Activated T-helper 2 cell treated with anti-CD3 and anti-CD28 coated beads, Interferon-gamma antibody, Interleukin-2, Interleukin-4, amounts not matched to agents 10 μg/mL and 5 μg/mL and 100 μg/mL, durations not matched to agents 14 hours and 24 hours and 36 hours (primary cell): ENCODE measurements at regions of chr10 and their contacts with region 1.

Region 1: DNA sequence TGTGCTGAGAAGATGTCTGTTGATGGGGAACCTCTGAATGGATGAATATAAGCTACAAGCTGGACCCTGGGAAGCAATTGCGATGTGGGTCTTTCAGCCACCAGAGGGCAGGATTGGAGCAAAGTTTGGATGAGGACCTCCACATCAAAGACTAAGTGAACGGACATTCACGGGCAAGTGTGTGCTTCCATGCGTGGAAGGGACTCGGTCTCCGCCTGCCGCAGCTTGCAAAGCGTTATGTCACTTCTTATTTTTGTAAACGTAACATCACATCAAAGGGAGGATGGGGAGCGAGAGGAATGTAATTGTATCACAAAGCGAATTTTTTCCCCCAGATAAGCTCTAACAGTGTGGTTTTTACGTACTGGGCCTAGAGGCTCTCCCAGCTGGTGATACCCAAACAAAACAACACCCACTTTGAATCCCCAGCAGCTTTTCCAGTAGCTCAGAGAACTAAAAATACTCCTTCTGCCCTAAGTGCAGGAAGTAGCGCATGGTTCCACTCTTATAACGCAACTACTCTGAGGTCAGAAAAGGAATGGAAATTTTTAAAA is 65.0 kb downstream of the VWA2 start:
- DNase-seq: peak; percentile 59
- H3K4me3 Mint-ChIP-seq: peak overlapping the region; percentile 90
- H3K27ac Mint-ChIP-seq: peak overlapping the region; percentile 84
- H3K4me1 Mint-ChIP-seq: peaks cover 13% of the 10 kb centered on the region
- H3K27me3 Mint-ChIP-seq: no peaks in the 10 kb centered on the region

Region 2: DNA sequence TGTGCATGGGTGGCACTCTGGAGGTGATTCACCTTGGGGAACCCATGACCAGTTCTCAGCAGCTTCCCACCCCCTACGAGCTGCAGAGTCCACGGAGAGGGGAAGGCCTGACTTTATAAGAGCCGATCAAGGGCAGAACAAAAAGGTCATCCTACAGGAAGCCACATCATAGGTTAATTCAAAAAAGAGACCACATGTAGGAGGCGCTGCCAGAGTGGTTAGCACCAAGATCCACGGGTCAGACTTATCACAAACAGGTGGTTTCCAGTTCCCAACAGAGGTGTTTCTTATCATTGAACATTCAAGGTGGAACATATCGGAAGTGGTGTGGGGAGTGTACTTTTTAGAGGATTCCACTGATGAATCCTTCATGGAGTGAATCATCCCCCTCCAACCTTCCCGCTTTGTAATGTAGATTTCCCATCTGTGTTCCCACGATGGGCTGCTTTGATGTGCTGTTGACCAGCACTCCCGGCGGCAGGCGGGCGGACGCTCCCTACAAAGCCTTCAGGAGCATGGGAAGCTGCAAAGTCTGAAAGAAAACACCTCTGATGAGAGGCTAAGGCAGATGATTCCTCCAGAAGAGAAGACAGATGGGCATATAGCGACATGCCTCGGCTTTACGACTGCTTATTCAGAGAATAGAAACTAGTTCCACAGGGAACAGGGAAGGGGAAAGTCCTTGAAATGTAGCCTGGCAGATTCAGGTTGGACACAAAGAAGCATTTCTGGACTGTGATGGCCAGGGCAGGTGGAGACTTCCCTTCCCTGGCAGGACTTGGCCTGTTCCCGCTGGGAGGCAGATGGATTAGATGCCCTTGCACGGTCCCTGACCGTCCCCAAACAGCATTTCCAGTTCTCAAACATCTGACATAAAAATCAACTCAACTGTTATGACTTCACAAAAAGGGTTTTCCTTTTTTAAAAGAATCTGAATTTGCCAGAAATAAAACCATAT is 33.7 kb after region 1 on chr10:
- intact Hi-C with region 1: loop called (anchors 1 kb)
- DNase-seq: no peak
- H3K4me3 Mint-ChIP-seq: no peak overlapping the region
- H3K27ac Mint-ChIP-seq: peak overlapping the region; percentile 46
- H3K4me1 Mint-ChIP-seq: peaks cover 33% of the 10 kb centered on the region
- H3K27me3 Mint-ChIP-seq: peaks cover 2% of the 10 kb centered on the region

Region 3: DNA sequence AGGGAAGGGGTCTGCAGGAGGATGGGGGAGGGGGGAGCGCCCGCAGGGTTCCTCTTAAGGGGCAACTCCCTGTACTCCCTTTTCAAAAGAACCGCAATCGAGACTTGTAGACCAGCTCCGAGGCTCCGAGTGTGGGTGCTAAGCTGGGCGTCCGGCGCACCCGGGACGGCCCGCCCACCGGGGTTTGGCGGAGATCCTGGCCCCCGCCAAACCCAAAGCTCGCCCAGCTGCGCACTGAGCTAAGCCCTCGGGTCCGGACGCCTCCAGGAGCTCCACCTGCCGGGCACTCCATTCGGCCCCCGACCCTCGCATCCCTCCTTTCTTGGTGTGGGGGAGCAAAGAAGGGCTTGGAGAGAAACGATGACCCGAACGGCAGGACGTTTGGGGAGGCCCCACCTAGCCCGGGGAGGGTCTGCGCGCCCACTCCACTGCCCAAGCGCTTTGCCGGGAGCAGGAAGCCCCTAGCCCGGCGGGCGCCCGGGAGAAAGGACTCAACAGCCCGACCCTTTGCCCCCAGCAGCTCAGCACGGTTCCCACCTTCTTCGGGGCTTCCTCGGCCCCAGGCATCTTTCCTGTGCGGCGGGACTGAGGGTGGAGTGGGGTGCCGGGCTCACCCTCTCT is 99.6 kb after region 1 on chr10:
- intact Hi-C with region 1: loop called (anchors 5 kb)
- DNase-seq: no peak
- H3K4me3 Mint-ChIP-seq: peak overlapping the region; percentile 24
- H3K27ac Mint-ChIP-seq: no peak overlapping the region
- H3K4me1 Mint-ChIP-seq: peaks cover 8% of the 10 kb centered on the region
- H3K27me3 Mint-ChIP-seq: peaks cover 66% of the 10 kb centered on the region

Region 4: DNA sequence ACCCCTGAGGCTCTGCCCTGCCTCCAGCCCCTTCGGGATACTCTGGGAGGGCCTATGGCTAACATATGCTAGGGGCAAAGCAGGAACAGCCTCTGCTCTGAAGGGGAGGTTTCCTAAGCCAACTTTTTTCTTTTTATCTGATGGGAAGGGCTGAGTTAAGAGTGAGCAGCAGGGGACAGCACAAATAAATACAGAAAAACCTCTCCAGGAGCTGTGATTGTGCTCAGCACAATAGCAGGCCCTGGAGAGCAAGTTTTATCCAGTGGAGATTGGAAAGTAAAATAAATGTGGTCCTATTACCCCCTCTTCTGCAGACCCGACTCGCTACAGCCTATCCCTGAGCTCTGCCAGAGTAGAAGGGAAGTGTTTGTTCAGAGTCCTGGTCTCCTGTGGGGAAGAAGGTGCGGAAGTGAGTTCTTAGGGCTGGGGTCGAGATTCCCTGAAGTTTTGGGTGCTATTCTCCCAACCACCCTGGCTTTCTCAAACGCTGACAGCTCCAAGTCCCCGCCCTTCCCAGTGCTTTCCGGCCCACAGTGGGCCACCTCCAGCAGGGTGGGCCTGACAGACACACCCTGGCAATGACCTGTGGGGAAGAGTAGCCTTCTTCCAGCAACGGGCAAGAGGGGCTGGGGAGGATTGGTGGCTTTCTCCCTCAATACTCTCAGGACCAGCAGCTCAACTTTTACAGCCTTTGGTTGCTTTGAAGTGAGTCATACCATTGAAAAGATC is 123.2 kb after region 1 on chr10:
- intact Hi-C with region 1: no loop called
- DNase-seq: no peak
- H3K4me3 Mint-ChIP-seq: no peak overlapping the region
- H3K27ac Mint-ChIP-seq: no peak overlapping the region
- H3K4me1 Mint-ChIP-seq: no peaks in the 10 kb centered on the region
- H3K27me3 Mint-ChIP-seq: peaks cover 5% of the 10 kb centered on the region

Region 5: GRCh38 chr10:114458955-114459354 is 154.9 kb after region 1 on chr10:
- intact Hi-C with region 1: loop called (anchors 1 kb)
- DNase-seq: no peak
- H3K4me3 Mint-ChIP-seq: no peak overlapping the region
- H3K27ac Mint-ChIP-seq: peak overlapping the region; percentile 24
- H3K4me1 Mint-ChIP-seq: peaks cover 15% of the 10 kb centered on the region
- H3K27me3 Mint-ChIP-seq: no peaks in the 10 kb centered on the region

Region 6: GRCh38 chr10:114684085-114684821 is 380.2 kb after region 1 on chr10:
- intact Hi-C with region 1: no loop called
- DNase-seq: no peak
- H3K4me3 Mint-ChIP-seq: no peak overlapping the region
- H3K27ac Mint-ChIP-seq: no peak overlapping the region
- H3K4me1 Mint-ChIP-seq: no peaks in the 10 kb centered on the region
- H3K27me3 Mint-ChIP-seq: peaks cover 15% of the 10 kb centered on the region

Region 7: GRCh38 chr10:114779803-114780609 is 475.9 kb after region 1 on chr10:
- intact Hi-C with region 1: loop called (anchors 10 kb)
- DNase-seq: no peak
- H3K4me3 Mint-ChIP-seq: no peak overlapping the region
- H3K27ac Mint-ChIP-seq: no peak overlapping the region
- H3K4me1 Mint-ChIP-seq: peaks cover 12% of the 10 kb centered on the region
- H3K27me3 Mint-ChIP-seq: peaks cover 28% of the 10 kb centered on the region